ENCODE measurements at regions of chr11 and their contacts with region 1.

Region 1: GRCh38 chr11:119144825-119145486 is 3.9 kb upstream of the ABCG4 start:
- DNase-seq: peak; percentile 56 to 66
- ATAC-seq: peak; percentile 69 to 87 (median 82)
- H3K4me3 ChIP-seq: no peak overlapping the region
- H3K27ac ChIP-seq: no peak overlapping the region
- H3K4me1 ChIP-seq: peaks cover 9% of the 10 kb centered on the region
- H3K27me3 ChIP-seq: peaks cover 0 to 6% (median 0%) of the 10 kb centered on the region in 3 donors
- CTCF ChIP-seq: peak; percentile 67

Region 2: DNA sequence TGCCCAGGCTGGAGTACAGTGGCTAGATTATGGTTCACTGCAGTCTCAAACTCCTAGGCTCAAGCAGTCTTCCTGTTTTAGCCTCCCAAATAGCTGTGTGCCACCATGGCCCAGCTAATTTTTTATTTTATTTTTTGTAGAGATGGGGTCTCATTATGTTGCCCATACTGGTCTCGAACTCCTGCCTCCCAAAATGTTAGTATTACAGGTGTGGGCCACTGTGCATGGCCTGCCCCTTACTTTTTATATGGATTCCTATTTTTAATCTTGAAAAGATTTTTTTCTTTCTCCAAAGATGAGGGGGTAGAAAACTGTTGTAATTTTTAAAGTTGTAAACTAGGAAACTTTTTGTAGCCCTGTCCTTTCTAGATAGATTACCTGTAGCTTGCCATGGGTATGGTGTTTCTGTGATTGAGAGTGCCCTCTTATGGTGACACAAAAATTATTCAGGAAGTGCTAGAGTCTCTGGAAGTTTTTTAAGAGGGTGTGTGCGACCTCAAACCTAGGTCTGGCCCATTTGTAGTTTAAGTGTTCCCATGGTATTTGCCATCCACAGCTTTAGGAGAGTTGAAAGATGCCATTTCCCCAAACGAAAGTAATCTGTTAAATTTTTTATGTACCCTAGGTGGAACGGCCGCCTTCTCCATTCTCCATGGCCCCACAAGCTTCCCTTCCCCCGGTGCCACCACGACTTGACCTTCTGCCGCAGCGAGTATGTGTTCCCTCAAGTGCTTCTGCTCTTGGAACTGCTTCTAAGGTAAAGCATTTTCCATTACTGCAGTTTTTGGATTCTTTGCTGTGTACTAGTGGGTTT is 139.6 kb after region 1 on chr11:
- intact Hi-C with region 1: loop called in 1 of 2 experiments (anchors 10 kb)
- DNase-seq: no peak
- ATAC-seq: peak; percentile 57 to 79 (median 66)
- H3K4me3 ChIP-seq: no peak overlapping the region
- H3K27ac ChIP-seq: no peak overlapping the region
- H3K4me1 ChIP-seq: no peaks in the 10 kb centered on the region
- H3K27me3 ChIP-seq: no peaks in the 10 kb centered on the region
- CTCF ChIP-seq: peak; percentile 52

Region 3: GRCh38 chr11:119323538-119324033 is 178.6 kb after region 1 on chr11:
- intact Hi-C with region 1: loop called in 1 of 2 experiments (anchors 10 kb)
- DNase-seq: peak; percentile 73 to 81
- ATAC-seq: peak in 2 of 4 donors; percentile 38 to 62
- H3K4me3 ChIP-seq: no peak overlapping the region
- H3K27ac ChIP-seq: no peak overlapping the region
- H3K4me1 ChIP-seq: peaks cover 4% of the 10 kb centered on the region
- H3K27me3 ChIP-seq: no peaks in the 10 kb centered on the region
- CTCF ChIP-seq: peak; percentile 70

Measured in psoas muscle (tissue), 8 donors.